IMR-90 (cell line): ENCODE measurements at regions of chr16 and their contacts with region 1.

Region 1: DNA sequence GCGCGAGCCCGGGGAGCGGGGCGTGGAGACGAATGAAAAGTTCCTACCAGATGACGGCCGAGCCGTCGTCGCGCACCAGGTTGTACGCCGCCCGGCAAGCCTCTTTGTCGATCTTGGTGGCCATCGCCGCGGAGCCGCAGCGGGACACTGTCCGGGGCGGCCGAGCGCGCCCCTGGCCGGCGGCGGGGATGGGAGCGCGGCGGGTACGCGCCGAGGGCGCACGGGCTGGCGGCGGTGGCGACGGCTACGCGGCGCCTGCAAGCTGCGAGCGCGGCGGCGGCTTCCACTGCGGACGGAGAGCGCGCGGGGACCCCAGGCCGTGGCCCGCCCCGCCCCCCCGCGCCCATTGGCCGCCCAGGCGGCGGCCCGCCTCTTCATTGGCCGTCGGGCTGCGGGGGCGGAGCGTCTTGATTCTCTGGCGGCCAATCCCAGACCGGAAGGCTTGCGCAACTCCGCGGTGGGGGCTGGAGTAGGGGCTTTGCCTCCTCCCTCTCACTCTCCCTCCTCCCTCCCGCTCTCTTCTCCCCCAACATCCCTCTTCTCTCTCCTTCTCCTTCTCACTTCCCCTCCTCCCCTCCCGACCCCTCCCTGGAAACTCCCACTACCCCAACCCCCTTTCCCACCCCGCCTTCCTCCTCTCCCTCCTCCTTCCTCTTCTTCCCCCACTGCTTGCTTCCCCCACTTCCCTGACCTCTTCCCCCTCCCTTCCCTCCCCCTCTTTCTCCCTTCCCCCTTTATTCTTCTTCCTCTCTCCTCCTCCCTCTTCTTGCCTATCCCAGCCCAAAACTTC is at the start of gene COTL1:
- DNase-seq: peak; percentile 99
- ATAC-seq: peak; percentile 78
- H3K4me3 ChIP-seq: peak within 1 kb of the TSS; percentile 90
- H3K27ac ChIP-seq: peak within 1 kb of the TSS; percentile 97
- H3K4me1 ChIP-seq: peaks cover 27% of the 10 kb centered on the region
- H3K27me3 ChIP-seq: no peaks in the 10 kb centered on the region
- CTCF ChIP-seq: no peak
- POLR2A ChIP-seq: peak; percentile 97
- RAD21 ChIP-seq: no peak
- total RNA-seq, gene COTL1: 144 and 166 TPM in 2 replicates

Region 2: GRCh38 chr16:84294531-84295142 is 323.3 kb before region 1 on chr16 and contains the start of gene WFDC1:
- CTCF ChIA-PET with region 1: no interaction called
- POLR2A ChIA-PET with region 1: no interaction called
- dilution Hi-C with region 1: no loop called
- in situ Hi-C with region 1: no loop called
- intact Hi-C with region 1: loop called (anchors 10 kb)
- DNase-seq: peak; percentile 19
- ATAC-seq: peak; percentile 65
- H3K4me3 ChIP-seq: peak within 1 kb of the TSS; percentile 54
- H3K27ac ChIP-seq: peak within 1 kb of the TSS; percentile 98
- H3K4me1 ChIP-seq: peaks cover 42% of the 10 kb centered on the region
- H3K27me3 ChIP-seq: no peaks in the 10 kb centered on the region
- CTCF ChIP-seq: no peak
- POLR2A ChIP-seq: no peak
- RAD21 ChIP-seq: no peak
- total RNA-seq, gene WFDC1: 4.7 and 5.0 TPM in 2 replicates

Region 3: GRCh38 chr16:84462261-84463210 is 155.4 kb before region 1 on chr16:
- CTCF ChIA-PET with region 1: no interaction called
- POLR2A ChIA-PET with region 1: no interaction called
- dilution Hi-C with region 1: no loop called
- in situ Hi-C with region 1: no loop called
- intact Hi-C with region 1: no loop called
- DNase-seq: no peak
- ATAC-seq: no peak
- H3K4me3 ChIP-seq: no peak overlapping the region
- H3K27ac ChIP-seq: no peak overlapping the region
- H3K4me1 ChIP-seq: no peaks in the 10 kb centered on the region
- H3K27me3 ChIP-seq: no peaks in the 10 kb centered on the region
- CTCF ChIP-seq: no peak
- POLR2A ChIP-seq: no peak
- RAD21 ChIP-seq: no peak

Region 4: DNA sequence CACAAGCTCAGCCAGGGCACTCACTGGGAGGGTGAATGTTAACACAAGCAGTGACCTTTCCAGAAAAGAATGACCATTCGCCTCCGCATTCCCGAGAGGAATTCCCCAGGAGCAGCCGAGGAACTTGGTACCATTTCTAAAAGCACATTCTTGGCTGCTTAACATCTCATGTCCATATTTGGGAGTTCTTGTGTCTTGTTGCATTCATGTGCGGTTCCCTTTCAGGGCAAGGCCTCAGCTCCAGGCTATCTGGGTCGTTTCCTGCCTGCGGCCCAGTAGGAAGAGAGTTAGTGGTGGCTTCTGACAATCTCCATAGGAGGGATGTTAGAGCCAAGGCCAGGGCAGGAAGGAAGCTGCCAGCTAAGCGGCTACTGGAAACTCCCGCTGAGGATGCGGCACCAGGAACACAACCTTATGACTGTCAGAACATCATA is 85.7 kb before region 1 on chr16:
- CTCF ChIA-PET with region 1: interaction called, 3 read pairs
- POLR2A ChIA-PET with region 1: no interaction called
- dilution Hi-C with region 1: no loop called
- in situ Hi-C with region 1: no loop called
- intact Hi-C with region 1: loop called (anchors 1 kb)
- DNase-seq: peak; percentile 98
- ATAC-seq: peak; percentile 98
- H3K4me3 ChIP-seq: no peak overlapping the region
- H3K27ac ChIP-seq: peak overlapping the region; percentile 85
- H3K4me1 ChIP-seq: peaks cover 12% of the 10 kb centered on the region
- H3K27me3 ChIP-seq: no peaks in the 10 kb centered on the region
- CTCF ChIP-seq: no peak
- POLR2A ChIP-seq: no peak
- RAD21 ChIP-seq: no peak

Region 5: GRCh38 chr16:84599521-84600202 is 18.3 kb before region 1 on chr16:
- CTCF ChIA-PET with region 1: no interaction called
- POLR2A ChIA-PET with region 1: interaction called, 3 read pairs
- dilution Hi-C with region 1: no loop called
- in situ Hi-C with region 1: no loop called
- intact Hi-C with region 1: loop called (anchors 2 kb)
- DNase-seq: peak; percentile 85
- ATAC-seq: peak; percentile 38
- H3K4me3 ChIP-seq: peak overlapping the region; percentile 3; the same call in 1 of the 2 replicates
- H3K27ac ChIP-seq: peak overlapping the region; percentile 87
- H3K4me1 ChIP-seq: peaks cover 53% of the 10 kb centered on the region
- H3K27me3 ChIP-seq: no peaks in the 10 kb centered on the region
- CTCF ChIP-seq: no peak
- POLR2A ChIP-seq: no peak
- RAD21 ChIP-seq: no peak; the same call in 1 of the 2 replicates

Region 6: GRCh38 chr16:84629580-84629979 is 11.6 kb after region 1 on chr16:
- CTCF ChIA-PET with region 1: no interaction called
- POLR2A ChIA-PET with region 1: no interaction called
- dilution Hi-C with region 1: no loop called
- in situ Hi-C with region 1: no loop called
- intact Hi-C with region 1: no loop called
- DNase-seq: no peak
- ATAC-seq: no peak
- H3K4me3 ChIP-seq: no peak overlapping the region
- H3K27ac ChIP-seq: no peak overlapping the region
- H3K4me1 ChIP-seq: peaks cover 4% of the 10 kb centered on the region; the same call in 1 of the 2 replicates
- H3K27me3 ChIP-seq: no peaks in the 10 kb centered on the region
- CTCF ChIP-seq: no peak
- POLR2A ChIP-seq: no peak
- RAD21 ChIP-seq: no peak

Region 7: DNA sequence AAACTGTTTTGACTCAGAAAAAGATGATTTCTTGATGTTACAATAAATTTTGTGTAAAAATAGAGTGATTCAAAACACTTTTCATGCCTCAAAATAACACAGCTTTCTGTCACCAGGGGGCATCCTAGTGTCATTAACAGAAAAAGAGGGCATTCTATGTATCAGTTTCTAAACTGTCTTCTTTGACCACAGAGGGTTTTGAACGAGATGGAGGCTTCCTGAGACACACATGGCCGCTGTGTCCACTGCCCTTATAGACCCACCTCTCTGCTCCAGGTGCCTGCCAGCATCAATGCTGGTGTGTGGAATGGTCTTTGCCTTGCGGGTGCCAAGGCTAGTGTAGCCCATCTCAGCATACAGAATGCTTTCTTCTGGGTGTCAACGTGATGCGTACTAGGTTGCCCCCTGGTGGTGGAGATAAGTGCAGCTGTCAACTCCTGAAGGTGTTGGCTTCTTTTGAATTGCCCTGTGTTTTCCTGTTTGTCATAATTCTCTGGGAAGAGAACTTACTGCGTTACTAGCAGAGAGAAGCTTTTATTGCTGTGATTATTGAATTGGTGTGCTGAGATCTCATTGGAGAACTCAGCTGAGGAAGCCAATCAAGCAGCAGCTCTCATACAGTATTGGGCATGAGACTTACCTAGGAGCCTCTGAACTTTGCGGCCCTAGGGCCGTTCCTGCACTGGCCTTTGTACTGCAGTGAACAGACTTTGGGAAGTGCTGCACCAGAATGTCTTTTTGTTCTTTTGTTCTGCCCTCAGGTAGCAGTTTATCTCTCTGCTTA is 120.5 kb after region 1 on chr16:
- CTCF ChIA-PET with region 1: interaction called, 14 read pairs
- POLR2A ChIA-PET with region 1: no interaction called
- dilution Hi-C with region 1: no loop called
- in situ Hi-C with region 1: no loop called
- intact Hi-C with region 1: no loop called
- DNase-seq: peak; percentile 70
- ATAC-seq: peak; percentile 20
- H3K4me3 ChIP-seq: no peak overlapping the region
- H3K27ac ChIP-seq: no peak overlapping the region
- H3K4me1 ChIP-seq: peaks cover 25% of the 10 kb centered on the region
- H3K27me3 ChIP-seq: no peaks in the 10 kb centered on the region
- CTCF ChIP-seq: peak; percentile 65
- POLR2A ChIP-seq: no peak
- RAD21 ChIP-seq: peak; percentile 56

Region 8: DNA sequence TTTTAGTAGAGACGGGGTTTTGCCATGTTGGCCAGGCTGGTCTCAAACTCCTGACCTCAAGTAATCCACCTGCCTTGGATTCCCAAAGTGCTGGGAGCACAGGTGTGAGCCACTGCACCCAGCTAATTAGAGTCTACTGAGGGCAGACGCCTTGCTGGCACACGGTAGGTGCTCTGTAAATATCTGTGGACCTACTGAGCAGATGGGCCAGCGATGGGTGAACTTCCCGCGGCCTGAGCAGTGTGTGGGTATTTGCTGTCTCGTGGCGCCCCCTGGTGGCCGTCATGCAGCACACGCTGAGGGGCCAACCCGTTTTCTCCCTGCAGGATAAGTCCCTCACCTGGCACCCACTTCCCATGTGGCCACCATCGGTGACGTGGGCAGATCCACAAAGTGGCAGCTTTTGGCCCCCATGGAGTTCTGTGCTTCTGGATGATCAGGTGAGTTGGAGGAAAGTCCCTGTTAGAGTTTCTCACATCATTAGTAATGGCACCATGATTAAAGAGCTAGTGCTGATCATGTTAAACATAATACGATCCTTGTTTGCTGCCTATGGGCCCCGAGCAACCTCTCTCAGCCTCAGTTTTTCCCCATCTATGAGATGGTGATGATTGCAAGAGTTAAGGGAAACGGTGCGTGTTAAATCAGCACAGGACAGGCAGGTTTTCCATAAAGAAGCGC is 352.6 kb after region 1 on chr16:
- CTCF ChIA-PET with region 1: no interaction called
- POLR2A ChIA-PET with region 1: no interaction called
- dilution Hi-C with region 1: no loop called
- in situ Hi-C with region 1: no loop called
- intact Hi-C with region 1: loop called (anchors 2 kb)
- DNase-seq: peak; percentile 76
- ATAC-seq: peak; percentile 84
- H3K4me3 ChIP-seq: no peak overlapping the region
- H3K27ac ChIP-seq: no peak overlapping the region
- H3K4me1 ChIP-seq: peaks cover 7% of the 10 kb centered on the region
- H3K27me3 ChIP-seq: no peaks in the 10 kb centered on the region
- CTCF ChIP-seq: peak; percentile 83
- POLR2A ChIP-seq: no peak
- RAD21 ChIP-seq: peak; percentile 91